ENCODE measurements at regions of chr16 and their contacts with region 1.

Region 1: DNA sequence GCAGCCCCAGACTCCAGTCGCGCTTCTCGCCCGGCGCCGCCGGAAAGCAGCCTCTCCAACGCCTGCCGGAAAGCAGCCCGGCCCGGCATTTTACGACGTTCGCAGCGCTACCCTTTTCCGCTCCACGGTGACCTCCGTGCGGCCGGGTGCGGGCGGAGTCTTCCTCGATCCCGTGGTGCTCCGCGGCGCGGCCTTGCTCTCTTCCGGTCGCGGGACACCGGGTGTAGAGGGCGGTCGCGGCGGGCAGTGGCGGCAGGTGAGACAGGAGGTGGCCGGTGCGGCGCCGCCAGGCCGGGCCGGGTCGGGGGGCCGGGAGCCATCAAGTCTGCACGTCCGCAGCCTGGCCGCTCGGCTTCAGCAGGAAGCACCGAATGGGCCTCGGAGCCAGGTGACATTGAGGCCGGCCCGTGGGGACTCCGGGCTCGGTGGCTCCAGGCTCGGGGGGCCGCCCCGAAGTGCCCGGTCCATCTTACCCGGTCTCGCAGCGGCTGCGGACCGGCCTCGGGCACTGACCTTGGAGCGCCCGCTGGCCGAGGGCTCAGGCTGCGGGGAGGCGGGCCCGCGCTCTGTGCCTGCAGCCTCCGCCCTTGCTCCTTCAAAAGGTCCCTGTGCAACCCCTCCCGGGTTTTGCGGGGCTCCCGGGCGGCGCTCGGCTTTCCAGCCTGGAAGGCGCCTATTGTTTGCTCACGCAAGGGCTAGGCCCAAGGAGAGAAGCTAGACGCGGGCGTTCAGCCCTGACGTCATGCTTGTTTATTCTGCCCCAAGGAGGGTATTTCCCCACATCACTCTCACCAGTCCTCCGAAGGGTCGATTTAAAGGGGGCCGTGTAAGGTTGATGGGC is at the starts of genes COX4I1 and EMC8:
- DNase-seq: peak; percentile 91
- H3K4me3 Mint-ChIP-seq: peak within 1 kb of the TSS; percentile 90
- H3K27ac Mint-ChIP-seq: peak within 1 kb of the TSS; percentile 91
- H3K4me1 Mint-ChIP-seq: peaks cover 27% of the 10 kb centered on the region
- H3K27me3 Mint-ChIP-seq: no peaks in the 10 kb centered on the region
- total RNA-seq, gene COX4I1: 543 and 561 TPM in 2 replicates
- total RNA-seq, gene EMC8: 36.1 and 40.2 TPM in 2 replicates

Region 2: DNA sequence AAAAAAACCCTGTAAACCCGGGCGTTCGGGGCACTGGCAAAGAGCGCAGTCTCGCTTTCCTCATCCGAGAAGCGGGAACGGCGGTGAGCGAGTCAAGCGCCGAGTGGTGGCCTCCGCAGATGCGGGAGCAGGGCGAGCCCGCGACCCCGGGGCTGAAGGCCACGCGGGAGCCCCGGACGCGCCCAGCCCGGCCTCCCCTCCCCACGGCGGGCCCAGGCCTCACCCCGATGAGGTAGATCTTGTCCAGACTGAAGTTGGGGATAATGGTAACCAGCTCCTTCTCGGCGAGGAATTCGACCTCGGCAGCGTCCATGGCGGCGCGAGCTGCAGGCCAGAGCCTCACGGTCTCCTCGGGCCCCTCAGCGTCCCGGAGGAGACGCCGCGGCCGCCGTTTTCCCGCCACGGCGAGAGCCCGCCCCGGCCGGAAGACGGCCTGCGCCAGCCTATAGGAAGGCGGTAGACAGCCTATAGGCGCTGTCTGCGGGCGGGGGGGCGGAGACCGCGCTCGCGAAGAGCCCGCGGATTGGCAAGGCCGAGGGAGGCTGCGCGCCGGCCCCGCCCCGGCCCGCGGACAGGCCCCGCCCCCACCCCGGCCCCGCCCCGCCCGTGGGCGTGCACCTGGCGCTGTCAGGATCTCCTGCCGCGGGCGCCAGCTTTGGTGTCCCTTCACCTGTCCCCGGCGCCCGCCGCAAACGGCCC is 111.0 kb before region 1 on chr16 and contains the start of gene GINS2:
- intact Hi-C with region 1: loop called (anchors 10 kb)
- DNase-seq: peak; percentile 89
- H3K4me3 Mint-ChIP-seq: peak within 1 kb of the TSS; percentile 85
- H3K27ac Mint-ChIP-seq: peak within 1 kb of the TSS; percentile 72
- H3K4me1 Mint-ChIP-seq: peaks cover 14% of the 10 kb centered on the region
- H3K27me3 Mint-ChIP-seq: peaks cover 3% of the 10 kb centered on the region
- total RNA-seq, gene GINS2: 66.8 and 66.9 TPM in 2 replicates

Region 3: GRCh38 chr16:85735225-85735635 is 64.5 kb before region 1 on chr16:
- intact Hi-C with region 1: no loop called
- DNase-seq: peak; percentile 18
- H3K4me3 Mint-ChIP-seq: no peak overlapping the region
- H3K27ac Mint-ChIP-seq: no peak overlapping the region
- H3K4me1 Mint-ChIP-seq: peaks cover 5% of the 10 kb centered on the region
- H3K27me3 Mint-ChIP-seq: peaks cover 2% of the 10 kb centered on the region

Region 4: GRCh38 chr16:85947230-85948137 is 147.8 kb after region 1 on chr16:
- intact Hi-C with region 1: no loop called
- DNase-seq: peak; percentile 18
- H3K4me3 Mint-ChIP-seq: peak overlapping the region; percentile 47
- H3K27ac Mint-ChIP-seq: no peak overlapping the region
- H3K4me1 Mint-ChIP-seq: peaks cover 44% of the 10 kb centered on the region
- H3K27me3 Mint-ChIP-seq: peaks cover 20% of the 10 kb centered on the region

Measured in activated T-helper 2 cell treated with anti-CD3 and anti-CD28 coated beads, Interferon-gamma antibody, Interleukin-2, Interleukin-4, amounts not matched to agents 10 μg/mL and 5 μg/mL and 100 μg/mL, durations not matched to agents 14 hours and 24 hours and 36 hours (primary cell).